ENCODE measurements at regions of chr13 and their contacts with region 1.

Region 1: DNA sequence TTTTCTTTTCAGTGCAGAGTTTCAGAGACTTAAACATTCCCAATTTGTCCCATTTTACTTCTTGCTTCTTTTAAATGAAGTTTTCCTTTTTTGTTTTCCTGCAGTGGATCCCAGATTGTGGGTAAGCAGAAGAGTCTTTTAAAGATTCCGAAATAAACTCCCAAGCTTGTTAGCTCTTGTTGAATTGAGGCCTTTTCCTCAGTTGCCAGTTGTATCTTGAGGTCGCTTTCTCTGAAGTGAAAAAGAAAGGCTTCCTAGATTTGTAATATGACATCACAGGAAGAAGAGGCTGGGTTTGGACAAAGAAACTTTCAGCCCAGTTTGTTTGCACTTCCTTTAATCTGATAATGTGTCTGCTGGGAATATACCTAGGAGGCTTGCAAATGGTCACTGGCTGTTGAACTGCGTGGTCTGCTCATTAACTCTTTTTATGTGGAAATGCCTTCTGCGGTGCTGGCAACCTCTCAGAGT is at the start of gene LPAR6:
- DNase-seq: peak; percentile 33 to 66 (median 63)
- H3K4me3 ChIP-seq: peak within 1 kb of the TSS; percentile 61 to 100 (median 86)
- H3K4me3 Mint-ChIP-seq: peak within 1 kb of the TSS; percentile 79 to 93
- H3K27ac ChIP-seq: peak within 1 kb of the TSS in 1 of 2 donors; percentile 82
- H3K27ac Mint-ChIP-seq: peak within 1 kb of the TSS; percentile 83 to 95 (median 90)
- H3K4me1 ChIP-seq: peaks cover 0 to 21% of the 10 kb centered on the region in 2 donors
- H3K4me1 Mint-ChIP-seq: peaks cover 31% of the 10 kb centered on the region
- H3K27me3 ChIP-seq: no peaks in the 10 kb centered on the region
- H3K27me3 Mint-ChIP-seq: no peaks in the 10 kb centered on the region
- CTCF ChIP-seq: no peak
- polyA plus RNA-seq, gene LPAR6: 17.2 to 72.6 (median 62.1) TPM

Region 2: DNA sequence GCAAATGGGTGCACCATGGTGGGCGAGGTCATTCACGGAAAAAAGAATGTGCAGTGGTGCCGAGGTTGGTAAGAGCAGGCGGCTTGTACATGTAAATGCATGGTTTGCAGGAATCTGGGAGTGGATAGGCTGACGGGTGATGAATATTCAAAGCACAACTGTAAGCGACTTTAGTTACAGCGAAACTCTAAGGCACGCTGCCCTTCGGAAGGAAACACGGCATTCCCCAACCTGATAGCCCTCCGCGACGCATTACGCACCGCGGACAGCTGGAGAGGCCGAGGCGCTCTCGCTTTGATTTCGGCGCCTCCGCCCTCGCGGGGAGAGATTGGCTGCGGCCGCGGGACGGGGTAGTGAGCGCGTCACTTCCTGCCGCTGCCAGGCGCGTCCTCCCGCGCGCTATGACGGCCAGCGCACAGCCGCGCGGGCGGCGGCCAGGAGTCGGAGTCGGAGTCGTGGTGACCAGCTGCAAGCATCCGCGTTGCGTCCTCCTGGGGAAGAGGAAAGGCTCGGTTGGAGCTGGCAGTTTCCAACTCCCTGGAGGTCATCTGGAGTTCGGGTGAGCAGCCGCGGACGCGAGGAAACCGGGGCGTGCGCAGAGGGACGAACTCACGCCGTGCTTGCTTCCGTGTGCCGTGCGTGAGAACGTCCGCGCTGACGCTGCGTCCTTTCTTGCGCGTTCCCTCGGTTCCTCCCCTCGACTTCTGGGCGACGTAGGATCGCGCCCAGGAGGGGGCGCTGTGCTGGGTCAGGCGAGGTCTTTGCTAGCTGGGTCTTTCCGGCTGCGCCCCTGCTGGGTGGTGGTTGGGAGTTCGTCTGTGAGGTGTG is 375.4 kb before region 1 on chr13 and contains the start of gene NUDT15:
- intact Hi-C with region 1: no loop called
- DNase-seq: peak; percentile 92 to 97 (median 96)
- H3K4me3 ChIP-seq: peak within 1 kb of the TSS; percentile 45 to 78 (median 64)
- H3K4me3 Mint-ChIP-seq: peak within 1 kb of the TSS; percentile 84 to 94
- H3K27ac ChIP-seq: peak within 1 kb of the TSS; percentile 94 to 96
- H3K27ac Mint-ChIP-seq: peak within 1 kb of the TSS; percentile 97 to 99 (median 99)
- H3K4me1 ChIP-seq: peaks cover 16 to 17% of the 10 kb centered on the region in 2 donors
- H3K4me1 Mint-ChIP-seq: peaks cover 24% of the 10 kb centered on the region
- H3K27me3 ChIP-seq: no peaks in the 10 kb centered on the region
- H3K27me3 Mint-ChIP-seq: no peaks in the 10 kb centered on the region
- CTCF ChIP-seq: peak; percentile 99
- polyA plus RNA-seq, gene NUDT15: 5.1 to 13.3 (median 12.6) TPM

Region 3: DNA sequence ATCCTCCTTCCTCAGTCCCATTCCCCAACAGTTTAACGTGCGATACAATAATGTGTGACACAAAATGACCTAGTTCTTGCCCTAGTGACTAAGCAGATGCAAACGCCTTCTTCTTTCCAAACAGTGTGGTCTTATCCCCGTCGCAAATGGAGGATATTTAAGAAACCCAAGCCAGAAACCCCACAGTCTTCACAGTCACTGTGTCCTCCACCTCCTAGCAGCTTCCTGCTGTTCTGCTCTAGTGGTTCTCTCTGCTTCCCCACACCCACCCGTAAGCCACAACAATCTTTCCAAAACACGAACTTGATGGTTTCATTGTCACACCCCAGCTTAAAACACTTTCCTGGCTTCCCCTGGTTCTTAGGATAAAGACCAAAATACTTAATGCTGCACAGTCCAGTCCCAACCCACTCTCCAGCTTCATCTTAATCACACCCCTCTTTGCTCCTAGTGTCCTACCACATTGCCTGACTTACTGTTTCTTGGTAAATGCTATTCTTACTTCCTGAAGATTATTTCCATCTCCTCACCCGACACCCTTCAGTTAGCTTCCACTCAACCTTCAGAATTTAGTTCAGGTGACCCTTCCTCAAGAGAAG is 147.6 kb before region 1 on chr13:
- intact Hi-C with region 1: no loop called
- DNase-seq: no peak
- H3K4me3 ChIP-seq: no peak overlapping the region
- H3K4me3 Mint-ChIP-seq: no peak overlapping the region
- H3K27ac ChIP-seq: peak overlapping the region in 1 of 2 donors; percentile 39
- H3K27ac Mint-ChIP-seq: peak overlapping the region in 6 of 7 donors; percentile 17 to 76 (median 37)
- H3K4me1 ChIP-seq: peaks cover 17 to 33% of the 10 kb centered on the region in 2 donors
- H3K4me1 Mint-ChIP-seq: peaks cover 29% of the 10 kb centered on the region
- H3K27me3 ChIP-seq: no peaks in the 10 kb centered on the region
- H3K27me3 Mint-ChIP-seq: no peaks in the 10 kb centered on the region
- CTCF ChIP-seq: no peak

Region 4: DNA sequence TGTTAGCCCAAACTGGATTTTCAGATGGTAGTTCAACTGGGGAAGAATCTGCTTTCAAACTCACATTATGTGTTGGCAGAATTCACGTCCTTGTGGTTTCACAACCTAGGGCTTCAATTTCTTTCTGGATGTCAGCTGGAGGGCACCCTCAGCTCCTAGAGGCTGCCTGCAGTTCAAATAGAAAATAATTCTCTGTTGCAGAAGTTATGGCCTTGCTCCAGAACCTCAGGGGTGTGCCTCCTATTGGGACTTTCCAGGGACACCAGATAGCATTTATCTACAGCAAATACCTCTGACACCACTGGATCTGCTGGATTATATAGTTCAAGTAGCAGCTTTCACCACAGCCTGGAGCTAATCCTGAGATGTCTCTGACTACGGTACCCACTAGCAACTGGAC is 121.2 kb before region 1 on chr13:
- intact Hi-C with region 1: no loop called
- DNase-seq: no peak
- H3K4me3 ChIP-seq: no peak overlapping the region
- H3K4me3 Mint-ChIP-seq: no peak overlapping the region
- H3K27ac ChIP-seq: no peak overlapping the region
- H3K27ac Mint-ChIP-seq: no peak overlapping the region
- H3K4me1 ChIP-seq: no peaks in the 10 kb centered on the region
- H3K4me1 Mint-ChIP-seq: no peaks in the 10 kb centered on the region
- H3K27me3 ChIP-seq: no peaks in the 10 kb centered on the region
- H3K27me3 Mint-ChIP-seq: peaks cover 0 to 3% (median 0%) of the 10 kb centered on the region in 3 donors
- CTCF ChIP-seq: no peak

Region 5: DNA sequence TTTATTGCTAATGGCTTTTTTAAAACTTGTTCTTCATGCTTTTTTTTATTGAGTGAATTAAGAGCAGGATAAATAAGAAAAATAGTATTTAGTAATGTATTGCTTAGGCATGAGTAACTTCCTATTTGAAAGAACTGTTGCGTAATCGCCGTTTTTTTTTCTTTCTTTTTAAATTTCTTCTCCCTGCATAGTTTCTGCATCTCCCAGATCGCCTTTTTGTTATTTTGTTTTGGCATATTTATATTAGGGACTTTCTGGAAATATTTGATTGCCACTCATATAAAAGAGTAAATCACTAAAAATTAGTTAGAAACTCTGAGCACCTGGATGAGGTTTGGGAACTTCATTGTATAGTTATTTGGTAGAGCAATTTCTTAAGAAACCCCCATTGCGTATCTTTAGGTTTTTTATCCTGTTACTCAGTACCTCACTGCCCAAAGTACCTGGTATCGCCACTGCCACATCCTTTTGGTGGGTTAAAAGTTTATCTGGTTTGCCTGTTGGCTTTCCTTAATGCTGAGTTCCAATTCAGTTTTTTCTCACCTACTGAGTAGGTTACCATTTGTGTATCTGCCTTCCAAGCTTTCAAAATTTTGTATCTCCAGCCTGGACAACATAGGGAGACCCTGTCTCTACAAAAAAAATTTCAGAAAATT is 36.2 kb after region 1 on chr13:
- intact Hi-C with region 1: loop called in 1 of 2 experiments (anchors 5 kb)
- DNase-seq: peak; percentile 52 to 90 (median 68)
- H3K4me3 ChIP-seq: peak overlapping the region; percentile 25 to 70 (median 47)
- H3K4me3 Mint-ChIP-seq: peak overlapping the region; percentile 63 to 86
- H3K27ac ChIP-seq: peak overlapping the region; percentile 7 to 84
- H3K27ac Mint-ChIP-seq: peak overlapping the region; percentile 80 to 92 (median 87)
- H3K4me1 ChIP-seq: peaks cover 26 to 41% of the 10 kb centered on the region in 2 donors
- H3K4me1 Mint-ChIP-seq: peaks cover 23% of the 10 kb centered on the region
- H3K27me3 ChIP-seq: no peaks in the 10 kb centered on the region
- H3K27me3 Mint-ChIP-seq: no peaks in the 10 kb centered on the region
- CTCF ChIP-seq: no peak

Region 6: DNA sequence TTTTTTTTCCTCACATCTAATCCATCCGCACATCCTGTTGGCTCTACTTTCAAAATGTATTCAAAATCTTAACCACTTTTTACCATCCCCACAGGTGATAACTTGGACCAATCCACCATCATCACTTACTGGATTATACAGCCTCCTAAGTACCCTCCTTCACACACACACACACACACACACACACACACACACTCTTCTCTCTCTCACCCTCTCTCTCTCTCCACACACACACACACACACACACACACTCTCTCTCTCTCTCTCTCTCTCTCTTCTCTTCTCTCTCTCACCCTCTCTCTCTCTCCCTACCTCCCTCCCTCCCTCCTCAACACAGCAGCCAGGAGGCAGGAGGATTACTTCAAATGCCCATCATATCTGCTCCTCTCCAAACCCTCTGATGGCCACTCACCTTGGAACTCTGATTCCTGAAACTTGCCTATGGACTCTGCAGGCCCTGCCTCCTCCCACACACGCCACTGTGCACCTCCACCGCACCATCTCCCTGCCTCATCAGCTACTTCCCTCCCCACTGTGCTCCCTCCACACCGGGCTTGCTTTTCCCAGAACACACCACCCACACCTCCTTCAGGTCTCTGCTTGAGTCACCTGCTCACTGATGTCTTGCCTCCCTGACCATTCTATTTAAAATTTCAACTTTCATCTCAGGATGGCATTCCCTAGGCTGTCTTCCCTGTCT is 80.3 kb after region 1 on chr13:
- intact Hi-C with region 1: no loop called
- DNase-seq: no peak
- H3K4me3 ChIP-seq: peak overlapping the region in 1 of 3 experiments; percentile 69
- H3K4me3 Mint-ChIP-seq: no peak overlapping the region
- H3K27ac ChIP-seq: peak overlapping the region; percentile 91 to 92
- H3K27ac Mint-ChIP-seq: no peak overlapping the region
- H3K4me1 ChIP-seq: peaks cover 60 to 71% of the 10 kb centered on the region in 2 donors
- H3K4me1 Mint-ChIP-seq: peaks cover 43% of the 10 kb centered on the region
- H3K27me3 ChIP-seq: no peaks in the 10 kb centered on the region
- H3K27me3 Mint-ChIP-seq: no peaks in the 10 kb centered on the region
- CTCF ChIP-seq: no peak

Measured in CD14-positive monocyte (primary cell).